CD8-positive, alpha-beta T cell (primary cell): ENCODE measurements at regions of chr6 and their contacts with region 1.

Region 1: DNA sequence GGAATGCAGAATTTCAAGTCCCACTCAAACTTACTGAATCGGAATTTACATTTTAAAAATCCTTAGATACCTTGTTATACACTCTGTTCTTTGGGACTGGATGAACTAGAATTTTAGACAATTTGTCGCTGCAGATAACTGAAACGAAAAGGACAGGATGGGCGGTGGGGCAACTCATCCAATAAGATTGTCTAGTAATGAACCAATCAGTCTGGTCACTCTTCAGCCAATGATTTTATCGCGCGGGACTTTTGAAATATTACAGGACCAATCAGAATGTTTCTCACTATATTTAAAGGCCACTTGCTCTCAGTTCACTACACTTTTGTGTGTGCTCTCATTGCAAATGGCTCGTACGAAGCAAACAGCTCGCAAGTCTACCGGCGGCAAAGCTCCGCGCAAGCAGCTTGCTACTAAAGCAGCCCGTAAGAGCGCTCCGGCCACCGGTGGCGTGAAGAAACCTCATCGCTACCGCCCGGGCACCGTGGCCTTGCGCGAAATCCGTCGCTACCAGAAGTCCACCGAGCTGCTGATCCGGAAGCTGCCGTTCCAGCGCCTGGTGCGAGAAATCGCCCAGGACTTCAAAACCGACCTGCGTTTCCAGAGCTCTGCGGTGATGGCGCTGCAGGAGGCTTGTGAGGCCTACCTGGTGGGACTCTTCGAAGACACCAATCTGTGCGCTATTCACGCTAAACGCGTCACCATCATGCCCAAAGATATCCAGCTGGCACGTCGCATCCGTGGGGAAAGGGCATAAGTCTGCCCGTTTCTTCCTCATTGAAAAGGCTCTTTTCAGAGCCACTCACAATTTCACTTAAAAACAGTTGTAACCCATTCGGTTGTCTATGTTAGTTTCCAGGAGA is 41.9 kb upstream of the HFE start:
- DNase-seq: peak; percentile 54 to 93 (median 79)
- ATAC-seq: peak; percentile 59
- H3K4me3 ChIP-seq: peak overlapping the region; percentile 67 to 76
- H3K4me3 Mint-ChIP-seq: peak overlapping the region; percentile 89
- H3K27ac ChIP-seq: peak overlapping the region; percentile 73 to 81
- H3K27ac Mint-ChIP-seq: peak overlapping the region; percentile 98
- H3K4me1 ChIP-seq: peaks cover 7% of the 10 kb centered on the region
- H3K4me1 Mint-ChIP-seq: peaks cover 14% of the 10 kb centered on the region
- H3K27me3 ChIP-seq: no peaks in the 10 kb centered on the region
- H3K27me3 Mint-ChIP-seq: no peaks in the 10 kb centered on the region
- CTCF ChIP-seq: no peak

Region 2: GRCh38 chr6:25100288-25100687 is 945.0 kb before region 1 on chr6:
- CTCF ChIA-PET with region 1: no interaction called
- POLR2A ChIA-PET with region 1: no interaction called
- intact Hi-C with region 1: no loop called
- DNase-seq: no peak
- ATAC-seq: no peak
- H3K4me3 ChIP-seq: no peak overlapping the region
- H3K4me3 Mint-ChIP-seq: no peak overlapping the region
- H3K27ac ChIP-seq: no peak overlapping the region
- H3K27ac Mint-ChIP-seq: no peak overlapping the region
- H3K4me1 ChIP-seq: no peaks in the 10 kb centered on the region
- H3K4me1 Mint-ChIP-seq: no peaks in the 10 kb centered on the region
- H3K27me3 ChIP-seq: no peaks in the 10 kb centered on the region
- H3K27me3 Mint-ChIP-seq: no peaks in the 10 kb centered on the region
- CTCF ChIP-seq: no peak

Region 3: DNA sequence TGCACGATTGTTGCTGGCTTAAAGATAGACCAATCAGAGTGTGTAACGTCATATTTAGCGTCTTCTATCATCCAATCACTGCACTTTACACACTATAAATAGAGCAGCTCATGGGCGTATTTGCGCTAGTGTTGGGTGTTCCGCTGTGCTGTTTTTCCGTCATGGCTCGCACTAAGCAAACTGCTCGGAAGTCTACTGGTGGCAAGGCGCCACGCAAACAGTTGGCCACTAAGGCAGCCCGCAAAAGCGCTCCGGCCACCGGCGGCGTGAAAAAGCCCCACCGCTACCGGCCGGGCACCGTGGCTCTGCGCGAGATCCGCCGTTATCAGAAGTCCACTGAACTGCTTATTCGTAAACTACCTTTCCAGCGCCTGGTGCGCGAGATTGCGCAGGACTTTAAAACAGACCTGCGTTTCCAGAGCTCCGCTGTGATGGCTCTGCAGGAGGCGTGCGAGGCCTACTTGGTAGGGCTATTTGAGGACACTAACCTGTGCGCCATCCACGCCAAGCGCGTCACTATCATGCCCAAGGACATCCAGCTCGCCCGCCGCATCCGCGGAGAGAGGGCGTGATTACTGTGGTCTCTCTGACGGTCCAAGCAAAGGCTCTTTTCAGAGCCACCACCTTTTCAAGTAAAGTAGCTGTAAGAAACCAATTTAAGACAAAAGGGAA is 24.8 kb before region 1 on chr6:
- CTCF ChIA-PET with region 1: interaction called, 8 read pairs
- POLR2A ChIA-PET with region 1: interaction called, 506 read pairs
- intact Hi-C with region 1: loop called (anchors 1 kb)
- DNase-seq: peak; percentile 69 to 95 (median 78)
- ATAC-seq: peak; percentile 47
- H3K4me3 ChIP-seq: peak overlapping the region; percentile 85 to 88
- H3K4me3 Mint-ChIP-seq: peak overlapping the region; percentile 88
- H3K27ac ChIP-seq: peak overlapping the region; percentile 95 to 98
- H3K27ac Mint-ChIP-seq: peak overlapping the region; percentile 99
- H3K4me1 ChIP-seq: peaks cover 10% of the 10 kb centered on the region
- H3K4me1 Mint-ChIP-seq: peaks cover 41% of the 10 kb centered on the region
- H3K27me3 ChIP-seq: no peaks in the 10 kb centered on the region
- H3K27me3 Mint-ChIP-seq: no peaks in the 10 kb centered on the region
- CTCF ChIP-seq: no peak

Region 4: GRCh38 chr6:26065952-26066380 is 20.7 kb after region 1 on chr6:
- CTCF ChIA-PET with region 1: interaction called, 20 read pairs
- POLR2A ChIA-PET with region 1: interaction called, 47 read pairs
- intact Hi-C with region 1: no loop called
- DNase-seq: peak in 7 of 9 experiments; percentile 32 to 86 (median 58)
- ATAC-seq: peak; percentile 95
- H3K4me3 ChIP-seq: no peak overlapping the region
- H3K4me3 Mint-ChIP-seq: no peak overlapping the region
- H3K27ac ChIP-seq: no peak overlapping the region
- H3K27ac Mint-ChIP-seq: no peak overlapping the region
- H3K4me1 ChIP-seq: peaks cover 6% of the 10 kb centered on the region
- H3K4me1 Mint-ChIP-seq: peaks cover 5% of the 10 kb centered on the region
- H3K27me3 ChIP-seq: no peaks in the 10 kb centered on the region
- H3K27me3 Mint-ChIP-seq: peaks cover 1% of the 10 kb centered on the region
- CTCF ChIP-seq: peak; percentile 95

Region 5: GRCh38 chr6:26103770-26104456 is 58.6 kb after region 1 on chr6:
- CTCF ChIA-PET with region 1: interaction called, 4 read pairs
- POLR2A ChIA-PET with region 1: interaction called, 40 read pairs
- intact Hi-C with region 1: loop called in 1 of 2 experiments (anchors 1 kb)
- DNase-seq: peak; percentile 84 to 97 (median 89)
- ATAC-seq: peak; percentile 91
- H3K4me3 ChIP-seq: peak overlapping the region; percentile 52 to 58
- H3K4me3 Mint-ChIP-seq: peak overlapping the region; percentile 85
- H3K27ac ChIP-seq: peak overlapping the region; percentile 85 to 92
- H3K27ac Mint-ChIP-seq: peak overlapping the region; percentile 98
- H3K4me1 ChIP-seq: peaks cover 7% of the 10 kb centered on the region
- H3K4me1 Mint-ChIP-seq: peaks cover 17% of the 10 kb centered on the region
- H3K27me3 ChIP-seq: no peaks in the 10 kb centered on the region
- H3K27me3 Mint-ChIP-seq: no peaks in the 10 kb centered on the region
- CTCF ChIP-seq: peak; percentile 67

Region 6: GRCh38 chr6:26204332-26205165 is 159.3 kb after region 1 on chr6:
- CTCF ChIA-PET with region 1: interaction called, 5 read pairs
- POLR2A ChIA-PET with region 1: interaction called, 85 read pairs
- intact Hi-C with region 1: no loop called
- DNase-seq: peak; percentile 75 to 98 (median 84)
- ATAC-seq: peak; percentile 74
- H3K4me3 ChIP-seq: peak overlapping the region; percentile 54 to 70
- H3K4me3 Mint-ChIP-seq: no peak overlapping the region
- H3K27ac ChIP-seq: peak overlapping the region; percentile 91
- H3K27ac Mint-ChIP-seq: no peak overlapping the region
- H3K4me1 ChIP-seq: peaks cover 31% of the 10 kb centered on the region
- H3K4me1 Mint-ChIP-seq: peaks cover 23% of the 10 kb centered on the region
- H3K27me3 ChIP-seq: no peaks in the 10 kb centered on the region
- H3K27me3 Mint-ChIP-seq: no peaks in the 10 kb centered on the region
- CTCF ChIP-seq: no peak

Region 7: GRCh38 chr6:26537846-26538571 is 492.7 kb after region 1 on chr6 and contains the start of gene HMGN4:
- CTCF ChIA-PET with region 1: no interaction called
- POLR2A ChIA-PET with region 1: interaction called, 5 read pairs
- intact Hi-C with region 1: loop called in 1 of 2 experiments (anchors 10 kb)
- DNase-seq: peak; percentile 65 to 96 (median 79)
- ATAC-seq: peak; percentile 69
- H3K4me3 ChIP-seq: peak within 1 kb of the TSS; percentile 66 to 99
- H3K4me3 Mint-ChIP-seq: peak within 1 kb of the TSS; percentile 89
- H3K27ac ChIP-seq: peak within 1 kb of the TSS; percentile 88 to 93
- H3K27ac Mint-ChIP-seq: peak within 1 kb of the TSS; percentile 92
- H3K4me1 ChIP-seq: peaks cover 32% of the 10 kb centered on the region
- H3K4me1 Mint-ChIP-seq: peaks cover 58% of the 10 kb centered on the region
- H3K27me3 ChIP-seq: no peaks in the 10 kb centered on the region
- H3K27me3 Mint-ChIP-seq: no peaks in the 10 kb centered on the region
- CTCF ChIP-seq: no peak
- total RNA-seq, gene HMGN4: 24.8 to 33.7 TPM